Activated CD8-positive, alpha-beta memory T cell treated with anti-CD3 and anti-CD28 coated beads, Interleukin-2, amount 10 ng/mL, durations not matched to agents 7 days and 5 days (primary cell): ENCODE measurements at regions of chr21 and their contacts with region 1.

Region 1: DNA sequence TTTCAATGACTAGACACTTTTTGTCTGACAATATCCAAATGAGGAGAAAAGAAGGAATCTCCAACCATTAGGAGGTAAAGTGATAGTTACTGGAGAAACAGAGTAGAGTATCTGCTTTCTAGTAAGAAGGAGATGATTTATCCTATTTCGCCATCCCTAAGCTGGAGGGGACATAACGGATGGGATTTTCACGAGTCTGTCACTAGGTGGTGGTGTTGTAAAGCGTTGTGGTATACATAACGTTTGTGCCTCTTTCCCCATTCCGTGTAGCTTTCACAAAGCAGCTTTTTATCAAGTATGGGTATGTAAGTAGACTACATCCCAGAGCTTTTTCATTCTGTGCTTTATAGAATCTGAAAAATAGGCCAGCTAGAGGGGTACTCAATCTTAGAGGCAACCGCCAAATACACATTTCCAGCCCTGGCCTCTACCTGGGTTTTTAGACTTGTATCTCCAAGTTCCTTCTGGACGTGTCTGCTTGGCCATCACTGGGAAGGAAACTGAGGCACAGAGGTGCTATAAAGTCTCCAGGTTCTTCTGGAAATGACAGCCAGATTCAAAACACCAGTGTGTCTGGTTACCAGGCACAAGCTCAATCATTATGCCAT is 33.3 kb upstream of the FAM3B start:
- DNase-seq: peak; percentile 59
- ATAC-seq: peak; percentile 94
- H3K4me3 Mint-ChIP-seq: no peak overlapping the region
- H3K27ac Mint-ChIP-seq: no peak overlapping the region
- H3K4me1 Mint-ChIP-seq: no peaks in the 10 kb centered on the region
- H3K27me3 Mint-ChIP-seq: peaks cover 30% of the 10 kb centered on the region

Region 2: DNA sequence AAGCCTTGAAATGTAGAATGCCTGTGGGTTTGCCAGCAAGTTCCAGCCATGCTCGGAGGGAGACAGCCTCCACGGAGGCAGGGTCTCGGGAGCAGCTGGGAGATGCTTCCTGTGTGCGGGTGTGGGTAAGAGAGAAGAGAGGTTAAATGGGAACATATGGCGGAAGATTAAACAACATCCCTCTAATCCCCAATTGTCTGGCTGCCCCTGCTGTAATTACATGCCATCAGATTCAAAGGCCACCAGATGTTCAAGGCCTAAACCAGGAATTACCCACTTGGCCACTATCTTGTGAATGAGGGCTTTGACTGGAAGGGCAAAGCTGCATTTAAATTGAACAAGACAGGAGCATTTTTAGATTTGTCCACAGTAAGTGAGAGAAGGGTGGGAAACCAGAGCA is 196.7 kb before region 1 on chr21:
- CTCF ChIA-PET with region 1: no interaction called
- DNase-seq: no peak
- ATAC-seq: no peak
- H3K4me3 Mint-ChIP-seq: no peak overlapping the region
- H3K27ac Mint-ChIP-seq: no peak overlapping the region
- H3K4me1 Mint-ChIP-seq: no peaks in the 10 kb centered on the region
- H3K27me3 Mint-ChIP-seq: peaks cover 6% of the 10 kb centered on the region

Region 3: GRCh38 chr21:41269535-41269934 is 13.8 kb before region 1 on chr21:
- CTCF ChIA-PET with region 1: interaction called, 10 read pairs
- DNase-seq: no peak
- ATAC-seq: no peak
- H3K4me3 Mint-ChIP-seq: no peak overlapping the region
- H3K27ac Mint-ChIP-seq: no peak overlapping the region
- H3K4me1 Mint-ChIP-seq: no peaks in the 10 kb centered on the region
- H3K27me3 Mint-ChIP-seq: peaks cover 22% of the 10 kb centered on the region

Region 4: DNA sequence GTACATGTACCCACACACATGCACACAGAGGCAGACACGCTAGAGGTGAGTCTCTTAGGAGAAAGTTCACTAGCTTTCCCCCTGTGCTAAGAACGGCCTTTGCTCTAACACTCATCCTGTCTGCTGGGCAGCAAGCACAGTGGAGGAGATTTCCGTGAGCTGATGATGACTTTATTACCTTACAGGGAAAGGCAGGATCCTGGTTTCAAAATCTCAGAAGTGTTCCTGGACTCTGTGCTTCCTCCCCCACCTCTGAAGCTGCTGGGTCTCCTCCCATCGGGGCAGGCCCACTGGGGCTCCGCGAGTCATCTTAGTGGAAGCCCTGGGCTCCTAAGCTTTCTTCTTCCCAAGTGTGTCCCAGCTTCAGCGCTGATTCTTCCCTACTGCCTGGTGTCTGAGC is 36.0 kb after region 1 on chr21:
- CTCF ChIA-PET with region 1: interaction called, 13 read pairs
- DNase-seq: no peak
- ATAC-seq: no peak
- H3K4me3 Mint-ChIP-seq: no peak overlapping the region
- H3K27ac Mint-ChIP-seq: no peak overlapping the region
- H3K4me1 Mint-ChIP-seq: peaks cover 6% of the 10 kb centered on the region
- H3K27me3 Mint-ChIP-seq: peaks cover 56% of the 10 kb centered on the region

Region 5: GRCh38 chr21:41373253-41373652 is 89.9 kb after region 1 on chr21:
- CTCF ChIA-PET with region 1: interaction called, 10 read pairs
- DNase-seq: no peak
- ATAC-seq: no peak
- H3K4me3 Mint-ChIP-seq: no peak overlapping the region
- H3K27ac Mint-ChIP-seq: no peak overlapping the region
- H3K4me1 Mint-ChIP-seq: peaks cover 55% of the 10 kb centered on the region
- H3K27me3 Mint-ChIP-seq: no peaks in the 10 kb centered on the region

Region 6: DNA sequence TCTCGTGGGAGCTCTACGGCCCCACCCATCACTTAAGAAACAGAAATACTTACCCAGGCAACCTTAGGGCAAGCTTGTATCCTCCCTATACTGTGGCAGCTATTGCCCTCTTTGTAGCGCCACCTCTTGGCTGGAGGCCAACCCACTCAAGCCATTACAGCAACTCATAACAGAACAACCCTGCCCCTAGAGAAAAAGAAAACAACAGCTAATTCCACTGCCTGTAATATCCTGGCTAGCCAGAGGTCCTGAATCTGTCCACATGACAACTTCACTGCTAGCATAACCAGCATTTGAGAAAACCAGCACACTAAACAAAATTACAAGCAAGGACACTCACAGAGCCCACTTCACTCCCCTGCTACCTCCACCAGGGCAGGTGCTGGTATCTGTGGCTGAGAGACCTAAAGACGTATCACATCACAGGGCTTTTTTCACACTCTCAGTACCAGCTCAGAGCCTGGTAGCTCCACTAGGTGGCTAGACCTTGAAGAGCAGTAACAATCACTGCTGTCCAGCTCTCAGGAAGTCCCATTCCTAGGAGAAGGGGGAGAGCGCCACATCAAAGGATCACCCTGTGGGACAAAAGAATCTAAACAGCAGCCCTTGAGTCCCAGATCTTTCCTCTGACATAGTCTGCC is 128.3 kb after region 1 on chr21:
- CTCF ChIA-PET with region 1: interaction called, 10 read pairs
- DNase-seq: peak; percentile 53
- ATAC-seq: peak; percentile 66
- H3K4me3 Mint-ChIP-seq: no peak overlapping the region
- H3K27ac Mint-ChIP-seq: no peak overlapping the region
- H3K4me1 Mint-ChIP-seq: peaks cover 5% of the 10 kb centered on the region
- H3K27me3 Mint-ChIP-seq: peaks cover 33% of the 10 kb centered on the region

Region 7: GRCh38 chr21:41460578-41461527 is 177.5 kb after region 1 on chr21:
- CTCF ChIA-PET with region 1: interaction called, 12 read pairs
- DNase-seq: peak; percentile 69
- ATAC-seq: peak; percentile 73
- H3K4me3 Mint-ChIP-seq: no peak overlapping the region
- H3K27ac Mint-ChIP-seq: peak overlapping the region; percentile 35
- H3K4me1 Mint-ChIP-seq: peaks cover 14% of the 10 kb centered on the region
- H3K27me3 Mint-ChIP-seq: no peaks in the 10 kb centered on the region

Region 8: GRCh38 chr21:41796451-41797080 is 513.3 kb after region 1 on chr21:
- CTCF ChIA-PET with region 1: no interaction called
- DNase-seq: no peak
- ATAC-seq: no peak
- H3K4me3 Mint-ChIP-seq: no peak overlapping the region
- H3K27ac Mint-ChIP-seq: no peak overlapping the region
- H3K4me1 Mint-ChIP-seq: no peaks in the 10 kb centered on the region
- H3K27me3 Mint-ChIP-seq: peaks cover 8% of the 10 kb centered on the region

Region 9: GRCh38 chr21:42107881-42108553 is 824.7 kb after region 1 on chr21:
- CTCF ChIA-PET with region 1: interaction called, 10 read pairs
- DNase-seq: peak; percentile 70
- ATAC-seq: peak; percentile 98
- H3K4me3 Mint-ChIP-seq: no peak overlapping the region
- H3K27ac Mint-ChIP-seq: no peak overlapping the region
- H3K4me1 Mint-ChIP-seq: peaks cover 4% of the 10 kb centered on the region
- H3K27me3 Mint-ChIP-seq: peaks cover 9% of the 10 kb centered on the region